ENCODE measurements at regions of chr17 and their contacts with region 1.

Region 1: GRCh38 chr17:63425482-63425881 is 20.6 kb downstream of the CYB561 start:
- DNase-seq: peak; percentile 91

Region 2: DNA sequence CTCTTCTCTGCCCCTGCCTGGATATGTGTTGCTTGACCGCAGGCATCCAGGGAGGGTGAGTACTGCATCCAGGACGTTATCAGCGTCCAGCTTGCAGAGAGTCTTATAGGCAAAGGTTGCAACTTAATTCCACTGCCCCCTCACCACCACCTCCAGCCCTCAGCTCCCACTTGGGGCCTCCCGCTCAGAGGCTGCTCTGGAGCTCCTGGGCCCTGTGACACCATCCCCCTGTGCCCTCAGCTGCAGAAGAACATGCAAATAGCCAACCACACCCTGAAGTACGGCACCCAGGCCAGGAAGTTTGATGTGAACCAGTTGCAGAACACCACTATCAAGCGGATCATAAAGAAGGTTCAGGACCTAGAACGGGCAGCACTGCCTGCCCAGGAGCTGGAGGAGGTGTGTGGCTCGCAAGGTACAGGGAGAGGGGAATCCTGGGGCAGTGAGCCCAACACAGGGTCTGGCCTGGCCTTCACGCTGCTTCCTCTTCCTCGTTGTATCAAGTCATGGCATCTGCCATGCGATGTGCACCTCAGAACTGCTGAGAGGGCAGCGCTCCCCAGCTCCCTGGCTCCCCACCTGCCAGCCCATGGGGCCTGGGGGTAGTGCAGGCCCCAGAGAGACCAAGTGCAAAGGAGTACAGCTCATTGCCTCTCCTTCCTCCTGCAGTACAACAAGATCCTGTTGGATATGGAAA is 61.0 kb after region 1 on chr17:
- intact Hi-C with region 1: no loop called
- DNase-seq: no peak

Region 3: GRCh38 chr17:63503334-63503692 is 77.8 kb after region 1 on chr17:
- intact Hi-C with region 1: no loop called
- DNase-seq: no peak

Region 4: DNA sequence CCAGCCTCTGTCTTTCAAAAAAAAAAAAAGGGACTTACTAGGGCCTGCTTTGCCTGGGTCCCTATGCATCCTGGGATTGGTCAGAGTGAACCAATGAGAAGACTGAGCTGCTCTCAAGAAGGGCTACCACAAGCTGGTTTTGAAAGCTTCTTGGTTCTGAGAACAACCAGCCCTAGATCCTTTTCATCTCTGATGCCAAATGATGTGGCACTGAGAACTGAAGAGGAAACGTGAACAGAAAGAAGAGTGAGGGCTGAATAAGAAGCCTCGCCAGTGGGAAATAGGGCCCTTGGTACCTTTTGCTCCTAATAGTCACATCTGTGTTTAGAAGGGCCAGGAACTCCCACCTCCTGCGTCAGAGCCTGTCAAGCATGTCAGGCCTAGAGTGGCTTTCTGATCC is 185.9 kb after region 1 on chr17:
- intact Hi-C with region 1: loop called (anchors 5 kb)
- DNase-seq: no peak

Region 5: GRCh38 chr17:64174686-64175456 is 749.4 kb after region 1 on chr17:
- intact Hi-C with region 1: no loop called
- DNase-seq: no peak

Measured in posterior vena cava (tissue), 2 donors.